Heart left ventricle (tissue), 16 donors: ENCODE measurements at regions of chr6 and their contacts with region 1.

Region 1: DNA sequence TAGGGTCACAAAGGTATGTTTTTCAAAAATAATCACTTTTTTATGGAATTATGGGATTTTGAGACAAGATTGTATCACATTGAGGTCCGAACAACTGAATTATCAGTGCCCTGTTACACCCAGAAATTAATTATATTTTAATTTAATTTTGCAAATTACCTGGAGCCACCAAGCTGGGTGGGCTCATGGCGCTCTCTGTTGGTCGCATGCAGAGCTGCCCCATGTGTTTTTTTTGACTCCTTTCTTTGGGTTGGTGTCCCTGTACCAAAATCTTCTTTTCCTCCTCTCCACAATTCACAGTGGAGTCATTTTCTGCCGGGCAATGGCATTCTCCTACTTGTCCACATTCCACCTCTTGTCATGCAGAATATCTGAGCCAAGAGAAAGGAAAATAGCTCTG is 38.9 kb upstream of the FRMD1 start:
- DNase-seq: peak in 1 of 5 donors; percentile 9
- ATAC-seq: peak in 1 of 4 donors; percentile 34
- H3K4me3 ChIP-seq: no peak overlapping the region
- H3K27ac ChIP-seq: no peak overlapping the region
- H3K4me1 ChIP-seq: no peaks in the 10 kb centered on the region
- H3K27me3 ChIP-seq: no peaks in the 10 kb centered on the region
- CTCF ChIP-seq: peak; percentile 38 to 68 (median 59)
- POLR2A ChIP-seq: no peak

Region 2: GRCh38 chr6:167907837-167908681 is 209.9 kb before region 1 on chr6:
- intact Hi-C with region 1: loop called in 4 of 10 experiments (anchors 2 to 5 kb)
- DNase-seq: no peak
- ATAC-seq: peak in 2 of 4 donors; percentile 61 to 64
- H3K4me3 ChIP-seq: peak overlapping the region in 1 of 12 donors; percentile 12
- H3K27ac ChIP-seq: peak overlapping the region in 1 of 12 donors; percentile 62
- H3K4me1 ChIP-seq: peaks cover 0 to 22% (median 9%) of the 10 kb centered on the region in 12 donors
- H3K27me3 ChIP-seq: no peaks in the 10 kb centered on the region
- CTCF ChIP-seq: peak; percentile 33 to 77 (median 62)
- POLR2A ChIP-seq: no peak

Region 3: GRCh38 chr6:167913699-167914098 is 204.2 kb before region 1 on chr6:
- intact Hi-C with region 1: loop called in 4 of 10 experiments (anchors 2 to 5 kb)
- DNase-seq: no peak
- ATAC-seq: no peak
- H3K4me3 ChIP-seq: no peak overlapping the region
- H3K27ac ChIP-seq: no peak overlapping the region
- H3K4me1 ChIP-seq: no peaks in the 10 kb centered on the region
- H3K27me3 ChIP-seq: no peaks in the 10 kb centered on the region
- CTCF ChIP-seq: no peak
- POLR2A ChIP-seq: no peak

Region 4: GRCh38 chr6:168050881-168051586 is 66.9 kb before region 1 on chr6:
- intact Hi-C with region 1: loop called in 2 of 10 experiments (anchors 5 kb)
- DNase-seq: peak in 1 of 5 donors; percentile 28
- ATAC-seq: no peak
- H3K4me3 ChIP-seq: no peak overlapping the region
- H3K27ac ChIP-seq: no peak overlapping the region
- H3K4me1 ChIP-seq: peaks cover 14 to 40% (median 25%) of the 10 kb centered on the region in 12 donors
- H3K27me3 ChIP-seq: no peaks in the 10 kb centered on the region
- CTCF ChIP-seq: peak in 4 of 12 donors; percentile 5 to 34 (median 20)
- POLR2A ChIP-seq: no peak

Region 5: DNA sequence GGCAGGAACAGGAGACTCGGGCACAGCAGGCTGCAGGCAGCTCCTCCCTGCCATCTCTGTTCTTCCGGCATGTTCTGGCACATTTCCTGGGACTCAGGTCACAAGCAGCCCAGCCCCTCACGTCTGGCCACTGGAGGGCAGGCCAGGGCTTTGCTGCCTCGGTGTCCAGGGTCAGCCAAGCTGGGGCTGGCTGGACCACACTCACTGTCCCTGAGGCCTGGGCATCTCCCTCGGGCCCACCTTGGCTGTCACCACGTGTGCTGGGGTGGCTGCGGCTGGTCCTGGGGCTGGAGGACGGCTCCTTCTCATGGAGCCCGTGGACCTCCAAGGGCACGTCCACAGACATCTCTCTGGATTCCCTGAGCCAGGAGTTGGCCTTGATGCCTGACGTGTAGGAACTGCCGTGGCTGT is 57.4 kb before region 1 on chr6:
- intact Hi-C with region 1: loop called in 7 of 10 experiments (anchors 5 kb)
- DNase-seq: peak; percentile 74 to 82 (median 80)
- ATAC-seq: peak; percentile 59 to 88 (median 77)
- H3K4me3 ChIP-seq: no peak overlapping the region
- H3K27ac ChIP-seq: no peak overlapping the region
- H3K4me1 ChIP-seq: peaks cover 3 to 26% (median 9%) of the 10 kb centered on the region in 12 donors
- H3K27me3 ChIP-seq: no peaks in the 10 kb centered on the region
- CTCF ChIP-seq: peak; percentile 42 to 79 (median 68)
- POLR2A ChIP-seq: no peak